ENCODE measurements at regions of chr13 and their contacts with region 1.

Region 1: DNA sequence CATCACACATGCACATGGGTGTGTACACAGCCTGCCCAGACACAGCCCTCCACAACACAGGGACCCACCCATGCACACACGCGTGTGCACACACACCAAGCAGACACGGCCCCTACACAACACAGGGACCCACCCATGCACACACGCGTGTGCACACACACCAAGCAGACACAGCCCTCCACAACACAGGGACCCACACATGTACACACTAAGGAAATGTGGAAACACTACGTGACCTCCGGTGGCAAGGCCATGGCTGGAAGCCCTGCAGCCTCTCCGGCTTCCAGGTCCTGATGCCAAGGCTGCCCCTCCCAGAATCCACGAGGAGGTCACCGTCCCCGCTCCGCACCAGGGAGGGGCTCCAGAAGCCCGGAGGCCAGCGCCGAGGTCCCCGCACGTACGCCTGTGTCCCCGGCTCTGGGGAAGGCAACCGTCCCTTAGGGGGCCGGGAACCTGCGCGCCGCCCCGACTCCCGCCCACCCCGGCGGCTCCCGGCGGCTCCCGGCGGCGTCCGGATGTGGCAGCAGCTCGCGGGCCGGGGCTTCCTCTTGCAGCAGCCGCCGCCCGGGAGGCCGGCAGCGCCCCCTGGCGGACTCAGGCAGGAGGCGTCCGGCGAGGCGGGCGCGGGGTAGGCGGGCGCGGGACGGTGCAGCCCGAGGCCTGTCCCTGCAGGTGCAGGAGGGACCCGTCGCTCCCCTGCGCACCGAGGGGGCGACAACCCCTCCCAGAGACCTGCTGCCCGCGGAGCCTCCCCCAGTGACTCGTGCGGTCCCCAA is 29.8 kb upstream of the GRTP1 start:
- DNase-seq: peak; percentile 77
- H3K4me3 Mint-ChIP-seq: peak overlapping the region; percentile 84
- H3K27ac Mint-ChIP-seq: peak overlapping the region; percentile 67
- H3K4me1 Mint-ChIP-seq: peaks cover 4% of the 10 kb centered on the region
- H3K27me3 Mint-ChIP-seq: no peaks in the 10 kb centered on the region

Region 2: DNA sequence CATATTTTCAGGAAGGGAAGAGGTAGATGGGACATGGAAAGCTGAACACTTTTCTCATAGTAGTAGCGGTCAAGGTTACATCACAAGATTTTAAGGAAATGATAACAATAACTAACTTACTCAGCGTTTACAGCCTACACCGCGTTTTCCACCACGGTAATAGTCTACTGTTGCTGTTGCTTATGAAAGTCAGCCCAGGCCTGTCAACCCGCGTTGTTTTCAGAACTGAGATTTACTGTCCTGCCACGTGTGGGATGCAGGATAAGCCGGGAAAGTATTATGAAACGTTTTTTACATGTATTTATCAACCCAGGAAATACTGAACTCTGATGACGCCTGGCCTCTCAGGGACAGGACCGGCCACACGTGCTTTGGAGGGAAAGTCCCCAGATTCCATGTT is 132.8 kb before region 1 on chr13:
- intact Hi-C with region 1: no loop called
- DNase-seq: no peak
- H3K4me3 Mint-ChIP-seq: no peak overlapping the region
- H3K27ac Mint-ChIP-seq: no peak overlapping the region
- H3K4me1 Mint-ChIP-seq: no peaks in the 10 kb centered on the region
- H3K27me3 Mint-ChIP-seq: no peaks in the 10 kb centered on the region

Region 3: DNA sequence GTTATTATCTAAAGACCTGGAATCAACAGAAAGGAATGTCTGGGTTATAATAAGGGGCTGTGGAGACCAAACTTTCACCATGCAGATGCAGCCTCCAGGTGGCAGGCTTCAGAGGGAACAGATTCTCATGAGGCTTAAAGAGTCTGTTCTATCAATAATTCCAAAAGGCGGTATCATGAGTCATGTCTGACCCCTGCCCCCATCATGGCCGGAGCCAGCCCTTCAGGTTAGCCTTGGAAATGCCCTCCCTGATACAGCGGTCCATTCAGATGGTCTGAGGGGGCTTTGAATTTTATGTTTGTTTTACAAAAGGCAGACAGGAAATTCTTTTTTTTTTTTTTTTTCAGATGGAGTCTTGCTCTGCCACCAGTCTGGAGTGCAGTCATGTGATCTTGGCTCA is 118.4 kb before region 1 on chr13:
- intact Hi-C with region 1: loop called (anchors 1 kb)
- DNase-seq: no peak
- H3K4me3 Mint-ChIP-seq: no peak overlapping the region
- H3K27ac Mint-ChIP-seq: no peak overlapping the region
- H3K4me1 Mint-ChIP-seq: peaks cover 2% of the 10 kb centered on the region
- H3K27me3 Mint-ChIP-seq: no peaks in the 10 kb centered on the region

Region 4: GRCh38 chr13:113350065-113350937 is 43.5 kb before region 1 on chr13:
- intact Hi-C with region 1: no loop called
- DNase-seq: no peak
- H3K4me3 Mint-ChIP-seq: no peak overlapping the region
- H3K27ac Mint-ChIP-seq: no peak overlapping the region
- H3K4me1 Mint-ChIP-seq: no peaks in the 10 kb centered on the region
- H3K27me3 Mint-ChIP-seq: no peaks in the 10 kb centered on the region

Region 5: DNA sequence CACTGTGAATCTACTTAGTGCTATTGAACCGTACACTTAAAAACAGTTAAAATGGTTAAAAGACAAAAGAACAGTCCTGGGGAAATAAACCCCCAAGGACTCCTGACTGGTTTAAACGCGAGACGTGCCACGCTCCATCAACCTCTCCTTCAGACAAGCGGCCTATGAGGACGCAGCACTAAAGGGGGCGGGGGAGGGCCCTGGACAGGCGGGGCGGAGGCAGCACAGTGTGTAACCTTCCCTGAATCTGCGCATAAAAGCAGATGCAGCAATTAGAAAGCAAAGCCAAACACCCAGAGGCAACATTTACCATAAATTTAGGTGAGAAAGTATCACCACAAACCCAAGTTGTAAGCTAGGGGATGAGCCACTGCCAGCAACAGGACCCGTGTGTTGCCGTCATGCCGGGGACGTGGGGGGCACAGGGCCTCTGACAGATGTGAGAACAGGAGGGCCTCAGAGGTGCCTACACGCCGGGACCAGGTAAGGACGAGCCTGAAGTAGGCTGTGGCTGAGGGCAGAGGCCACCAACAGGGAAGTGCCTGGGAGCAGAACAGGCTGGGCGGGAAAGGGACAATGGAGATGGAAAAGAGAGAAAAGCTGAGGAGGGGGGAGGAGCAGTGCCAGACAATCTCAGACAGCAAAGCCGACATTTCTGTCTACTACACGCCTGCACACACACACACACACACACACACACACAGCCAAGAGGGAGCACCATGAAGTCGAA is 74.9 kb after region 1 on chr13:
- intact Hi-C with region 1: no loop called
- DNase-seq: no peak
- H3K4me3 Mint-ChIP-seq: no peak overlapping the region
- H3K27ac Mint-ChIP-seq: no peak overlapping the region
- H3K4me1 Mint-ChIP-seq: peaks cover 2% of the 10 kb centered on the region
- H3K27me3 Mint-ChIP-seq: no peaks in the 10 kb centered on the region

Region 6: GRCh38 chr13:113774177-113775107 is 380.7 kb after region 1 on chr13:
- intact Hi-C with region 1: no loop called
- DNase-seq: no peak
- H3K4me3 Mint-ChIP-seq: no peak overlapping the region
- H3K27ac Mint-ChIP-seq: no peak overlapping the region
- H3K4me1 Mint-ChIP-seq: peaks cover 4% of the 10 kb centered on the region
- H3K27me3 Mint-ChIP-seq: peaks cover 5% of the 10 kb centered on the region